ENCODE measurements at regions of chr14 and their contacts with region 1.

Region 1: DNA sequence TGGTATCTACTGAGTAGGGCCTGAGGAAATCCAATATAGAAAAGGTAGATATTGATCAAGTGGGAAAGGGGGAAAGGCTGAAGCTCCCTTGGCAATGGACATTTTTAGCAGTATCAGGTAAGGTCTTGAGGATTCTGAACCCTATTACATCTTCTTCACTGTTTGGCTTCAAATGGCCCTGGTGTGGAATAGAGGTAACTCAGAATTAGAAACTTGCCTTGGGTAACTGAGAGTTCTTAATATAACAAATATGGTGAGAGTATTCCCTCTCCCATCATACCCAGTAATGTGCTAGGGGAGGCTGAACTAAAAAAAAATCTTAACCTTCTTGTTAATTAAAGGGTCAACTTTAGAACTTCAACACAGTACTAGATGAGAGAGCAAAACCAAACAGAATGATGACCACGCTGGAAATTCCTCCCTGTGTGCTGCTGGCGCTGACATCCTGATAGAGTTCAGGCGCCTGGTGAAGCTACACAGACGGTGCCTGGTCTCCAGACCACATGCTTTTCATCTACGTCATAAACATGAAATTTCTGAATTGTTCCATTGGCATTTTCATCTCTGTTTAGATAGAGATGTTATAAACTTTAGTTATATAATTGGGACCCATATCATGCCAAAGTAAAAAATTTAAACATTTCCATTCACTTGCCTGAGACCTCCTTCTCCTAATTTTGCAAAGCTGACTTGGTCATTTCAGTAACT is 128.3 kb downstream of the AKAP6 start:
- DNase-seq: peak; percentile 84
- ATAC-seq: peak; percentile 94
- H3K4me3 ChIP-seq: no peak overlapping the region
- H3K27ac ChIP-seq: no peak overlapping the region; the same call in 1 of the 2 replicates
- H3K4me1 ChIP-seq: peaks cover 2% of the 10 kb centered on the region; the same call in 1 of the 2 replicates
- H3K27me3 ChIP-seq: no peaks in the 10 kb centered on the region
- CTCF ChIP-seq: no peak
- POLR2A ChIP-seq: no peak
- RAD21 ChIP-seq: no peak

Region 2: DNA sequence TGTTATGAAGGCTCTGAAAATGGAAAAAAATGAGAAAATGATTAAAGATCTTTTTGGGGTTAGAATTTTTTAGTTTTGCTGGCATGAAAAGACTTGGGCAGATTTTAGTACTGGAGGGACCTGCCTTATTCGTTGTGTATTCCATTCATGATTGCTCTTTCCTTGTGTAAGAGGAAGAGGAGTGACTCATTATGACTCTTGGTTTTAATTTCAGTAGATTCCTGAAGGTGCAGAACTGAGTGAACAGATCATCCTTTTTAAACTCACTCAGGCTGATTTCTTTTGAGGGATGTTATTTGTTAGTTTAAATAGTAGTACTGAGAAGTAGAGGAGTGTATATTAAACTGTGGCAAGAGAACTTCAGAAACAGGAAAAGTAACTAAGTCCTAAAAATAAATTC is 86.6 kb before region 1 on chr14:
- CTCF ChIA-PET with region 1: no interaction called
- POLR2A ChIA-PET with region 1: no interaction called
- dilution Hi-C with region 1: no loop called
- in situ Hi-C with region 1: no loop called
- intact Hi-C with region 1: loop called (anchors 5 kb)
- DNase-seq: peak; percentile 89
- ATAC-seq: peak; percentile 83
- H3K4me3 ChIP-seq: no peak overlapping the region
- H3K27ac ChIP-seq: no peak overlapping the region
- H3K4me1 ChIP-seq: peaks cover 18% of the 10 kb centered on the region
- H3K27me3 ChIP-seq: no peaks in the 10 kb centered on the region
- CTCF ChIP-seq: no peak
- POLR2A ChIP-seq: no peak
- RAD21 ChIP-seq: no peak

Measured in IMR-90 (cell line).